Ascending aorta (tissue), 2 donors: ENCODE measurements at regions of chr17 and their contacts with region 1.

Region 1: DNA sequence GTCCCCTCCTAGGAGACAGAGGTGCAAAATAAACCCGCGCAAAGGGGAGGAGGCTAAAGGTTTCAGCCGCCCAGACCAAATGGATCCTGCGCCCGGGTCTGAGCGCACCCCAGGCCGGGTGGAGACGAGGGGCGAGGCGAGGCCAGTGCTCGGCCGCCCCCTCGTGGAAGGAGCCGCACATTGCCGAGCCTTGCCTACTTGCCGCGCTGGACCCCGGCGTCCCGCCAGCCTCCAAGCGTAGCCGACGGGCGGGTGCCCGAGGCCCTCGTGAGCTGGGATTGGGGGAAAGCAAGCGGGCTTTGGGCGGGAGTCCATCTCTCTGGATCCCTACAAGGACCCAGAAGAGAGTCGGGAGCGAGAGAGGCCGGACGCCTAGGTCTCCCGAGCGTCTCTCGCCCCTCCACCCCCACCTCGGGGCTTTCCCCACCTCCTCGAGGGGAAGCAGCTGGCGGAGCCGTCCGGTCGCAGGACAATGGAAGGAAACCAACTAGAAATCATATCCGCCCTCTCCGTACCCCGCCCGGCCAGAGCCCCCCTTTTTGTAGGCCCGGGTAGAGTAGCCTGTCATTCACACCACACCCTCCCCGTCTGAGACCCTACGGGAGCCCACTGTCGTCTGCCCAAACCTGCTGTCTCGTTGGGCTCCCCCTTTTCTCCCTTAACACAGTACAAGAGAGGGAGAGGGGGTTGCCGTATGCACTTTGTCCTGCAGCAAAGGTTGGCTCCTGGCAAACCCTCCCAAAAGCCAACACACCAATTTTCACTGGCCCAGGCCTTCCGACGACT is 664 bp upstream of the BCL6B start:
- DNase-seq: peak in 1 of 2 donors; percentile 89
- H3K4me3 ChIP-seq: peak overlapping the region; percentile 31 to 56
- H3K27ac ChIP-seq: peak overlapping the region; percentile 61 to 75
- H3K4me1 ChIP-seq: peaks cover 10 to 28% of the 10 kb centered on the region in 2 donors
- H3K27me3 ChIP-seq: peaks cover 14% of the 10 kb centered on the region
- CTCF ChIP-seq: peak; percentile 91 to 98 (median 94)

Region 2: DNA sequence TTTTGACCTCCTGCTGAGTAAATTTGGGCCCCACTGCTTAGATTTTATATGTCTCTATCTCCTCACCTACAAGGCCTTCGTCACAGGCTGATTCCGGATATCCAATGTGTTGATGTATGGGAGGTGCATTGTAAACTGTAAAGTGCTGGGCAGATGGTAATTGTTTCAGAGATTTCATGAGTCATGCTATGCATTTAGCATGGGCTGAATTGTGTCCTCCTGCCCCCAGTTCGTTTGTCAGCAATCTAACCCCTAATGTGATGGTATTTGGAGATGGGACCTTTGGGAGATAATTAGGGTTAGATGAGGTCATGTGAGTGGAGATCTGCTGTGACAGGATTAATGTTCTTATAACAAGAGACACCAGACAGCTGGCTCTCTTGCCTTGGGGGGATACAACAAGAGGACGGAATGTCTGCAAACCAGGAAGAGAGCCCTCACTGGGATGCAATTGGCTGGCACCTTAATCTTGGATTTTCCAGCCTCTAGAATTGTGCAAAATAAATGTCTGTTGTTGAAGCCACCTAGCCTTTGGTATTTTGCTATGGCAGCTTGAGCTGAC is 1336.0 kb before region 1 on chr17:
- intact Hi-C with region 1: no loop called
- DNase-seq: no peak
- H3K4me3 ChIP-seq: no peak overlapping the region
- H3K27ac ChIP-seq: no peak overlapping the region
- H3K4me1 ChIP-seq: no peaks in the 10 kb centered on the region
- H3K27me3 ChIP-seq: no peaks in the 10 kb centered on the region
- CTCF ChIP-seq: no peak

Region 3: GRCh38 chr17:6843241-6843880 is 178.8 kb before region 1 on chr17:
- intact Hi-C with region 1: loop called (anchors 5 kb)
- DNase-seq: no peak
- H3K4me3 ChIP-seq: no peak overlapping the region
- H3K27ac ChIP-seq: no peak overlapping the region
- H3K4me1 ChIP-seq: no peaks in the 10 kb centered on the region
- H3K27me3 ChIP-seq: no peaks in the 10 kb centered on the region
- CTCF ChIP-seq: peak; percentile 14 to 43 (median 22)

Region 4: GRCh38 chr17:6913608-6914443 is 108.4 kb before region 1 on chr17:
- intact Hi-C with region 1: loop called (anchors 5 kb)
- DNase-seq: peak in 1 of 2 donors; percentile 77
- H3K4me3 ChIP-seq: peak overlapping the region; percentile 30 to 52
- H3K27ac ChIP-seq: no peak overlapping the region
- H3K4me1 ChIP-seq: peaks cover 2 to 4% of the 10 kb centered on the region in 2 donors
- H3K27me3 ChIP-seq: no peaks in the 10 kb centered on the region
- CTCF ChIP-seq: peak; percentile 66 to 86 (median 75)